ENCODE measurements at regions of chr15 and their contacts with region 1.

Region 1: DNA sequence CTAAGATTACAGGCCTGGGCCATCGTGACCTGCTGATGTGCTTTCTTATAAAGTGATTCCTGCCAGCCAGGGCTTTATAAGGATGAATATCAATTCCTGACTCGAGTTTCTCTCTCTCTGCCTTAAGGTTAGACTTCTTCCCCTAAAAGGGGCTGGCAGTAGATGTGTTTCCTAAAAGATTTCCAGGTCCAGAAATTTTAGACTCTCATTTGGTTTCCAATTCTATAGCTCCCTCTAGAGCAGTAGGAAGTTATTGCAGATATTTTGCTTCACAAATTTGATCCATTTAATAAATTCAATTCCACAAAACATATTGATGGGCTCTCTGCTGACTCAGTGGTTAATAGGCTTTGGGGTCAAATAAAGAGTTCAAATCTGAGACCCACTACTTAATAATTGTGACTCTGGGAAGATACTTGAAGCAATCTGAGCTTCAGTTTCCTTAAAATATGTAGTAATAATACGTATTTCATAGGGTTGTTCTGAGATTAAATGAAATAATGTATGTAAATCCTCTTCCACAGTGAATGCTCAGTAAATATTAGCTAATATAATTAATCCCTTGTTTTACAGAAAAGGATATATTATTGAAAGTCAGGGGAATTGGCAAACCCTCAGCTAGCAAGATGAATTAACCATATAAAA is 2.1 kb downstream of the TRIM69 start:
- DNase-seq: no peak
- H3K4me3 Mint-ChIP-seq: no peak overlapping the region
- H3K27ac Mint-ChIP-seq: no peak overlapping the region
- H3K4me1 Mint-ChIP-seq: peaks cover 54% of the 10 kb centered on the region
- H3K27me3 Mint-ChIP-seq: no peaks in the 10 kb centered on the region

Region 2: GRCh38 chr15:44580105-44580504 is 158.4 kb before region 1 on chr15:
- CTCF ChIA-PET with region 1: interaction called, 12 read pairs
- POLR2A ChIA-PET with region 1: no interaction called
- DNase-seq: no peak
- H3K4me3 Mint-ChIP-seq: no peak overlapping the region
- H3K27ac Mint-ChIP-seq: no peak overlapping the region
- H3K4me1 Mint-ChIP-seq: peaks cover 19% of the 10 kb centered on the region
- H3K27me3 Mint-ChIP-seq: no peaks in the 10 kb centered on the region

Region 3: DNA sequence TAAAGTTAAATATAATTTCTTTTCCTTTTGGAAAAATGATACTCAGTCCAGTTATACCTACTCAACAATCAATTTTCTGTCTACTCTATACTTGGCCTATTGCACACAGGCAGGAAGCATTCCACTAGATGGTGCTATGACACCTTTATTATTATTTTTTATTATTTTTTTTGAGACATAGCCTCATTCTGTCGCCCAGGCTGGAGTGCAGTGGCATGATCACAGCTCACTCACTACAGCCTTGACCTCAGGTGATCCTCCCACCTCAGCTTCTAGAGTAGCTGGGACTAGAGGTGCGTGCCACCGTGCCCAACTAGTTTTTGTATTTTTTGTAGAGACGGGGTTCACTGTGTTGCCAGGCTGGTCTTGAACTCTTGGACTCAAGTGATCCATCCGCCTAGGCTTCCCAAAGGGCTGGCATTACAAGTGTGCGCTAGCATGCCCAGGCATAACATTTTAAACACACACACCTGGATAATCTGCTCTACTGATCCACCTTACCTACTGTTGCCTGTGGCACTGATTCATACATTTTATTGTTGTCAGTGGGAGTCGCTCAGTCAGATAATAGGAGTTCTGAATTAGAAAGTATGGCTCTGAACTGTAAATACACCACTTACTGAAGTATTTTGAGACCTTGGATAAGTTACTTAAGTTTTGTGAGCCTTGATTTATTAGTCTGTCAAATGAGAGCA is 145.3 kb before region 1 on chr15:
- CTCF ChIA-PET with region 1: interaction called, 14 read pairs
- POLR2A ChIA-PET with region 1: no interaction called
- DNase-seq: peak; percentile 42
- H3K4me3 Mint-ChIP-seq: no peak overlapping the region
- H3K27ac Mint-ChIP-seq: peak overlapping the region; percentile 72
- H3K4me1 Mint-ChIP-seq: peaks cover 32% of the 10 kb centered on the region
- H3K27me3 Mint-ChIP-seq: no peaks in the 10 kb centered on the region

Region 4: DNA sequence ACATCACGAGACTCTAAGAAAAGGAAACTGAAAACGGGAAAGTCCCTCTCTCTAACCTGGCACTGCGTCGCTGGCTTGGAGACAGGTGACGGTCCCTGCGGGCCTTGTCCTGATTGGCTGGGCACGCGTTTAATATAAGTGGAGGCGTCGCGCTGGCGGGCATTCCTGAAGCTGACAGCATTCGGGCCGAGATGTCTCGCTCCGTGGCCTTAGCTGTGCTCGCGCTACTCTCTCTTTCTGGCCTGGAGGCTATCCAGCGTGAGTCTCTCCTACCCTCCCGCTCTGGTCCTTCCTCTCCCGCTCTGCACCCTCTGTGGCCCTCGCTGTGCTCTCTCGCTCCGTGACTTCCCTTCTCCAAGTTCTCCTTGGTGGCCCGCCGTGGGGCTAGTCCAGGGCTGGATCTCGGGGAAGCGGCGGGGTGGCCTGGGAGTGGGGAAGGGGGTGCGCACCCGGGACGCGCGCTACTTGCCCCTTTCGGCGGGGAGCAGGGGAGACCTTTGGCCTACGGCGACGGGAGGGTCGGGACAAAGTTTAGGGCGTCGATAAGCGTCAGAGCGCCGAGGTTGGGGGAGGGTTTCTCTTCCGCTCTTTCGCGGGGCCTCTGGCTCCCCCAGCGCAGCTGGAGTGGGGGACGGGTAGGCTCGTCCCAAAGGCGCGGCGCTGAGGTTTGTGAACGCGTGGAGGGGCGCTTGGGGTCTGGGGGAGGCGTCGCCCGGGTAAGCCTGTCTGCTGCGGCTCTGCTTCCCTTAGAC is 26.9 kb before region 1 on chr15 and contains the start of gene B2M:
- CTCF ChIA-PET with region 1: interaction called, 43 read pairs
- POLR2A ChIA-PET with region 1: interaction called, 42 read pairs
- DNase-seq: peak; percentile 96
- H3K4me3 Mint-ChIP-seq: peak within 1 kb of the TSS; percentile 96
- H3K27ac Mint-ChIP-seq: peak within 1 kb of the TSS; percentile 99
- H3K4me1 Mint-ChIP-seq: peaks cover 42% of the 10 kb centered on the region
- H3K27me3 Mint-ChIP-seq: no peaks in the 10 kb centered on the region
- total RNA-seq, gene B2M: 9,253 to 11,726 TPM

Region 5: GRCh38 chr15:44719293-44719999 is 19.0 kb before region 1 on chr15:
- CTCF ChIA-PET with region 1: interaction called, 43 read pairs
- POLR2A ChIA-PET with region 1: interaction called, 42 read pairs
- DNase-seq: peak; percentile 73
- H3K4me3 Mint-ChIP-seq: peak overlapping the region; percentile 55
- H3K27ac Mint-ChIP-seq: peak overlapping the region; percentile 92
- H3K4me1 Mint-ChIP-seq: peaks cover 88% of the 10 kb centered on the region
- H3K27me3 Mint-ChIP-seq: no peaks in the 10 kb centered on the region

Region 6: DNA sequence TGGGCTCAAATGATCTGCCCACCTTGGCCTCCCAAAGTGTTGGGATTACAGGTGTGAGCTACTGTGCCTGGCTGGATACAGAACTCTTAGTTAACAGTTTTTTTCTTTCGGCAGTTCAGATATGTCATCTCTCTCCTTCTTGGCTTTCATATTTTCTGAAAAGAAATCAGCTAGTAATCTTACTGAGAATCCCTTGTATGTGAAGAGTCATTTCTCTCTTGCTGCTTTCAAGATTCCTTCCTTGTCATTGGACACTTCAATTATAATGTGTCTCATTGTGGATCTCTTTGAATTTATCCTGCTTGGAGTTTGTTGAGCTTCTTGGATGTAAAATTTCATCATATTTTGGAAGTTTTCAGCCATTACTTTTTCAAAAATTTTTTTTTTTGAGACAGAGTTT is 14.9 kb after region 1 on chr15:
- CTCF ChIA-PET with region 1: interaction called, 27 read pairs
- POLR2A ChIA-PET with region 1: no interaction called
- DNase-seq: no peak
- H3K4me3 Mint-ChIP-seq: no peak overlapping the region
- H3K27ac Mint-ChIP-seq: no peak overlapping the region
- H3K4me1 Mint-ChIP-seq: peaks cover 5% of the 10 kb centered on the region
- H3K27me3 Mint-ChIP-seq: no peaks in the 10 kb centered on the region

Measured in activated CD4-positive, alpha-beta T cell treated with anti-CD3 and anti-CD28 coated beads, Interleukin-2, amount 10 ng/mL, durations not matched to agents 7 days and 5 days (primary cell).